Right cardiac atrium (tissue), 5 donors: ENCODE measurements at regions of chr2 and their contacts with region 1.

Region 1: DNA sequence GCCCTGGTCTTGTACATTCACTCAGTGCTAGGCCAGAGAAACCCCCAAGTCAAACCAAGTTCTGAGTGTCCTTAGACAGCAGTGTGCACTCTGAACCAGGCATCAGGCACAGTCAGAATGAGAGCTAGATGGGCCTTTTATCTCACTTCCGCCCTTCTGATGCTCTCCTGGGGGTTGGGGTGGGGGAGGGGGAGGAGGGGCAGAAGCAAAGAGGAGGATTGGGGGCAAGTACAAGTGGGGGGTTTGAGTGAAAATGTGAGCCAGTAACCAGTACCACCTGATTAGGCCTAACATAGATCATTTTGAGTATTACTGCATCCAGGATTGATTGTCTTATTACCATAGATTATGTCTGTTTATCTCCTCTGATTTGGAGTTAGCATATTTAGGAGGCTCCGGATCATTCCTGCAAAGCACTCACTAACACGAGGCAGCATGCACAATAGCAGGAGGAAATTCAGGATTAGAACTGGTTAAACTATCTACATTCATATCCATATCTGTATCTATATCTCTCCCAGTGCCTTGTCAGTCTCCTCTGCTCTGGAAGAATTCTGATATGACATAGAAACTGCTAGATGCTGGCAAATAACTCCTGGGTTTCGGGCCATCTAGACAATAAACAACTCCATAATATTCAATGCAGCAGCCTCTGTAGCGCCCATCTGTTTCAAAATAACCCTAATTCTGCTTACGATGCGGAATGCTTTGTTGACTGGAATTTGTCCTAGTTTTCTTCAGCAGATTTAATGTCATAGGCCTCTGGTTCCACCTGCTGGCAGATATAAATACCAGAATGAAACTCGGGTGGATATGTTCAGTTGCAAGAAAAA is 149.1 kb downstream of the RHBDD1 start:
- DNase-seq: no peak
- ATAC-seq: peak; percentile 69 to 72
- H3K4me3 ChIP-seq: no peak overlapping the region
- H3K27ac ChIP-seq: no peak overlapping the region
- H3K4me1 ChIP-seq: peaks cover 2% of the 10 kb centered on the region
- H3K27me3 ChIP-seq: no peaks in the 10 kb centered on the region

Region 2: DNA sequence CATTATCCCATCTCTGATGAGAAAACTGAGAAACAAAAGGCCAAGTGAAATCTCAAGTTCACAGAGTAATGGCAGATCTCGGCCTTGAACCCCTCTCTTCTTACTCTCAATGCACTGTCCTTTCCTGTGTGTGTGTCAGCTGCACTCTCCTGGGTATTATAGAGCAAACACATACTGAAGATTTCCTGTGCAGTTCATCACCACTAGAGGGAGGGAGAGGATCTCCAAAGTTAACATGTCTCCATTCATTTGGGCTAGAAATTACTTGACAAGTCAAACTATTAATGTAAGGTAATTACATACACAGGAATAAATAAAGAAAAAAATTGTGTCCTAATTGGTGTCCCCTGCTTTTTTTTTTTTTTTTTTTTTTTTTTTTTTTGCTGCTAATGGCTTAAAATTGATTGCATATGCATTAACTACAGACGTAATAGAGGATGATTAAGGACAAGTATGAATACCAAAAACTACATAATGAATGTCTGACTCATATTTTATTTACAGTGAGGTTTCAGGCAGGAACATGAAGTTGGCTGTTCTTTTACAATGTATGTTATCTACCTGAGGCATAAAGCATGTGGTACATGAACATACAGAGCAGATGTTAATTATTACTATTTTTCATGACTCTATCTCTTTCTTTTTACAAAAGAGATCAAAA is 1316.2 kb before region 1 on chr2:
- intact Hi-C with region 1: loop called (anchors 5 to 10 kb)
- DNase-seq: no peak
- ATAC-seq: peak; percentile 50 to 56
- H3K4me3 ChIP-seq: no peak overlapping the region
- H3K27ac ChIP-seq: no peak overlapping the region
- H3K4me1 ChIP-seq: no peaks in the 10 kb centered on the region
- H3K27me3 ChIP-seq: no peaks in the 10 kb centered on the region

Region 3: DNA sequence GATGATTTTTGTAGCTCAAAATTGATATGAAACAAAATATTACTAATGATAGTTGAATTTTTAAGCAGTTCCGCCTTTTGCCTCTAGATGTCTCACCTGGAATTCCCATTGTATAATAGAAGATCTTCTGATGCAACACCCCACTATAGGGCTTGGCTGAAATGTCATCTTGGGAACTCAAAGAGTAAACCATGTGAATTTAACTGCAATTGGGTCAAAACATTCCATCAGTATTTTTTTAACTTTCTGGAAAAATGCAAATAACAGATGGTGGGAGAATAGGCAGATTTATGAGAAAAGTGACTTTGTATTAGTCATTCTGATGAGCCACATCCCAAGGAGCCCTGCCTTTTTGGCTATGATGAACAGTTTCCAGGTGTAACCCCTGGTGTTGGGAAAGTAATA is 1095.5 kb before region 1 on chr2:
- intact Hi-C with region 1: loop called in 3 of 4 experiments (anchors 5 to 10 kb)
- DNase-seq: no peak
- ATAC-seq: peak in 1 of 2 donors; percentile 59
- H3K4me3 ChIP-seq: no peak overlapping the region
- H3K27ac ChIP-seq: no peak overlapping the region
- H3K4me1 ChIP-seq: no peaks in the 10 kb centered on the region
- H3K27me3 ChIP-seq: no peaks in the 10 kb centered on the region

Region 4: GRCh38 chr2:226813148-226813701 is 171.7 kb before region 1 on chr2:
- intact Hi-C with region 1: loop called (anchors 5 to 10 kb)
- DNase-seq: no peak
- ATAC-seq: no peak
- H3K4me3 ChIP-seq: no peak overlapping the region
- H3K27ac ChIP-seq: no peak overlapping the region
- H3K4me1 ChIP-seq: no peaks in the 10 kb centered on the region
- H3K27me3 ChIP-seq: no peaks in the 10 kb centered on the region

Region 5: GRCh38 chr2:227052879-227053278 is 67.9 kb after region 1 on chr2:
- intact Hi-C with region 1: no loop called
- DNase-seq: no peak
- ATAC-seq: no peak
- H3K4me3 ChIP-seq: no peak overlapping the region
- H3K27ac ChIP-seq: no peak overlapping the region
- H3K4me1 ChIP-seq: no peaks in the 10 kb centered on the region
- H3K27me3 ChIP-seq: no peaks in the 10 kb centered on the region

Region 6: DNA sequence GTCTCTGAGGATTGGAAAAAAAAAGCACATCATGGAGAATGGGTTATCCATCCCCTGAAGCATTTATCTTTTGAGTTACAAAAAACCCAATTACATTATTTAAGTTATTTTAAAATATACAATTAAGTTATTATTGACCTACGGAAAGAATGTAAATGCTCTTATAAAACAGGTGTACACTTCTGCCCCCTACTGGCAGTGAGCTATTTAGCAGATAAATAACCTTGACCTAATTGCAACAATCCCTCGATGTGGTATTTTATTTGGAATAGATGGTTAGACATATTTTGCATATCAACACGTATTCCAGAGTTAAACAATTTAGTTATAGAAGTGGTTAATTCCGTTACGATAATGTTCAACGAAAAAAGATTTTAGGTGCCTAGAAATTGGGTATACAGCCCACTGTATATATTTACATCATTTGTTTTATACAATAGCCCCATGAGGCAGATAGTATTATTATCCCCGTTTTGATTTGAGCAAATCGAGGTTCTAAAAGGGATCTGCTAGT is 877.3 kb after region 1 on chr2:
- intact Hi-C with region 1: no loop called
- DNase-seq: no peak
- ATAC-seq: no peak
- H3K4me3 ChIP-seq: no peak overlapping the region
- H3K27ac ChIP-seq: no peak overlapping the region
- H3K4me1 ChIP-seq: peaks cover 7% of the 10 kb centered on the region
- H3K27me3 ChIP-seq: no peaks in the 10 kb centered on the region